ENCODE measurements at regions of chr10 and their contacts with region 1.

Region 1: DNA sequence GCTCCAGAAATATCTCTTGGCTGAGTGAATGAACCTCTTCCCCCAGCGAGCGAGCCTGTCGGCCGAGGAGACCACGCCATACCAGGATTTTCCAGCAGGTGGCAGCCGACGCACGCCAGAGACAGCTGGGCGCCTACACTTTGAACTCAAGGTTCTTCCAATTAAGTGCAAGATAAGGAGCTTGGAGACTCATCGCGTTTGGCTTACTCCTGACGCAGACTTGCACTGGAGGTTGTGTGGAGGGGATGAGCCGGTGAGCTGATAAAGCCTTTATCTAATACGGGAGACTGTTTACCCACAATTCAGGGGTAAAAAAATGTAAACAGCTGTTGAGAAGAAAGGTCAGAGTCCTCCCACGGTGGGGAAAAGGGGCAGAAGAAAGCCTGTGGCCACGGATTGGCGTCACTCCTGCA is 45.9 kb upstream of the EMX2 start:
- DNase-seq: peak; percentile 72
- ATAC-seq: peak; percentile 98
- H3K4me3 ChIP-seq: no peak overlapping the region
- H3K27ac ChIP-seq: no peak overlapping the region
- H3K4me1 ChIP-seq: no peaks in the 10 kb centered on the region
- H3K27me3 ChIP-seq: no peaks in the 10 kb centered on the region
- CTCF ChIP-seq: peak; percentile 97
- POLR2A ChIP-seq: no peak
- RAD21 ChIP-seq: peak; percentile 98

Region 2: GRCh38 chr10:117363028-117363427 is 133.6 kb before region 1 on chr10:
- CTCF ChIA-PET with region 1: no interaction called
- POLR2A ChIA-PET with region 1: no interaction called
- dilution Hi-C with region 1: no loop called
- in situ Hi-C with region 1: no loop called
- intact Hi-C with region 1: no loop called
- DNase-seq: peak; percentile 78
- ATAC-seq: no peak
- H3K4me3 ChIP-seq: no peak overlapping the region
- H3K27ac ChIP-seq: no peak overlapping the region
- H3K4me1 ChIP-seq: no peaks in the 10 kb centered on the region; the same call in none of the 2 replicates
- H3K27me3 ChIP-seq: no peaks in the 10 kb centered on the region
- CTCF ChIP-seq: no peak
- POLR2A ChIP-seq: no peak
- RAD21 ChIP-seq: no peak

Region 3: GRCh38 chr10:117518246-117518645 is 21.6 kb after region 1 on chr10:
- CTCF ChIA-PET with region 1: no interaction called
- POLR2A ChIA-PET with region 1: no interaction called
- dilution Hi-C with region 1: no loop called
- in situ Hi-C with region 1: no loop called
- intact Hi-C with region 1: no loop called
- DNase-seq: no peak
- ATAC-seq: no peak
- H3K4me3 ChIP-seq: no peak overlapping the region
- H3K27ac ChIP-seq: no peak overlapping the region
- H3K4me1 ChIP-seq: no peaks in the 10 kb centered on the region
- H3K27me3 ChIP-seq: no peaks in the 10 kb centered on the region
- CTCF ChIP-seq: no peak
- POLR2A ChIP-seq: no peak
- RAD21 ChIP-seq: no peak

Region 4: GRCh38 chr10:118241229-118242137 is 744.9 kb after region 1 on chr10:
- CTCF ChIA-PET with region 1: interaction called, 14 read pairs
- POLR2A ChIA-PET with region 1: no interaction called
- dilution Hi-C with region 1: no loop called
- in situ Hi-C with region 1: loop called (anchors 5 kb)
- intact Hi-C with region 1: loop called (anchors 1 kb)
- DNase-seq: peak; percentile 77
- ATAC-seq: peak; percentile 90
- H3K4me3 ChIP-seq: no peak overlapping the region
- H3K27ac ChIP-seq: no peak overlapping the region
- H3K4me1 ChIP-seq: no peaks in the 10 kb centered on the region
- H3K27me3 ChIP-seq: peaks cover 9% of the 10 kb centered on the region
- CTCF ChIP-seq: peak; percentile 94
- POLR2A ChIP-seq: no peak
- RAD21 ChIP-seq: peak; percentile 90

Region 5: GRCh38 chr10:118423800-118424479 is 927.3 kb after region 1 on chr10:
- CTCF ChIA-PET with region 1: interaction called, 3 read pairs
- POLR2A ChIA-PET with region 1: no interaction called
- dilution Hi-C with region 1: no loop called
- in situ Hi-C with region 1: no loop called
- intact Hi-C with region 1: loop called (anchors 1 kb)
- DNase-seq: peak; percentile 81
- ATAC-seq: peak; percentile 96
- H3K4me3 ChIP-seq: no peak overlapping the region
- H3K27ac ChIP-seq: no peak overlapping the region
- H3K4me1 ChIP-seq: no peaks in the 10 kb centered on the region
- H3K27me3 ChIP-seq: no peaks in the 10 kb centered on the region
- CTCF ChIP-seq: peak; percentile 78
- POLR2A ChIP-seq: no peak
- RAD21 ChIP-seq: peak; percentile 68

Region 6: DNA sequence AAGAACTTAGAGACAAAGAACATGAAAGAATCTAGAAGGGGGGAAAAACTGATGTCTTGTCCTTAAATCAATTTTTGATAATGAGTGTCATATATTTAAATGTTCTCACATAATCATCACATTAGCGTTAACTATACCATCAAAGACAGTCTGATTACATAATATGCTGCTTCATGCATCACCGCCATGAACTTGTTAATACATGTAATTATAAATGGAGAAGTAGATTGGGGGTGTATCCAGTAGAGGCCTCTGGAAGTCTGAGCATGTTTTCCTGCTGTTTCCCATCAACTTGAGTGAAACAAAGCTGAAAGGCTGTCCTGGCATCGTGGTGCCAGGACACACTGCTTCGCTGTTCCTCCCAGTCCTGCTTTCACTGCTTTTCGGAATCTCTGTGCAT is 1050.7 kb after region 1 on chr10:
- CTCF ChIA-PET with region 1: no interaction called
- POLR2A ChIA-PET with region 1: no interaction called
- dilution Hi-C with region 1: no loop called
- in situ Hi-C with region 1: no loop called
- intact Hi-C with region 1: loop called (anchors 5 kb)
- DNase-seq: no peak
- ATAC-seq: no peak
- H3K4me3 ChIP-seq: no peak overlapping the region
- H3K27ac ChIP-seq: no peak overlapping the region
- H3K4me1 ChIP-seq: no peaks in the 10 kb centered on the region
- H3K27me3 ChIP-seq: no peaks in the 10 kb centered on the region
- CTCF ChIP-seq: no peak
- POLR2A ChIP-seq: no peak
- RAD21 ChIP-seq: no peak